Activated T-helper 2 cell treated with anti-CD3 and anti-CD28 coated beads, Interferon-gamma antibody, Interleukin-2, Interleukin-4, amounts not matched to agents 10 μg/mL and 5 μg/mL and 100 μg/mL, durations not matched to agents 14 hours and 24 hours and 36 hours (primary cell): ENCODE measurements at regions of chr3 and their contacts with region 1.

Region 1: DNA sequence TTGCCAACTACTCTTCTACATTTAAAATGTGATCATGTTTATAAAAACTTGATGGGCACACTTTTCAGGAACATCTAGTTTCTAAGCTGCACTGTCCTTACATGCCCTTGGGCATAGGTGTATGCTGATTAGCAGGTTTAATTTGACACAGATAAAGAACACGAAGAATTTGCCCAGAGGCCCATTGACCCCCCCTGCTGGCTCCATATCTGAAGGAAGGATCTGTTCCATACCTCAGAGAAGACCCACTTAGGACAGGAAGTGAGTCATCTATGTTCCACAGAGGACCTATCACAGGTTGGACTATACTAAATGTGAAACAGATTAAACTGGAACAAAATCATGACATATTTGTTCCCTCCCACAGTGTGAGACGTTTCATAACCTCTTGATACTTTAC is 92.8 kb upstream of the LPP start:
- DNase-seq: peak; percentile 59
- H3K4me3 Mint-ChIP-seq: peak overlapping the region; percentile 51
- H3K27ac Mint-ChIP-seq: peak overlapping the region; percentile 80
- H3K4me1 Mint-ChIP-seq: peaks cover 38% of the 10 kb centered on the region
- H3K27me3 Mint-ChIP-seq: no peaks in the 10 kb centered on the region

Region 2: GRCh38 chr3:187902041-187902471 is 159.1 kb before region 1 on chr3:
- intact Hi-C with region 1: no loop called
- DNase-seq: no peak
- H3K4me3 Mint-ChIP-seq: no peak overlapping the region
- H3K27ac Mint-ChIP-seq: no peak overlapping the region
- H3K4me1 Mint-ChIP-seq: peaks cover 11% of the 10 kb centered on the region
- H3K27me3 Mint-ChIP-seq: peaks cover 3% of the 10 kb centered on the region

Region 3: DNA sequence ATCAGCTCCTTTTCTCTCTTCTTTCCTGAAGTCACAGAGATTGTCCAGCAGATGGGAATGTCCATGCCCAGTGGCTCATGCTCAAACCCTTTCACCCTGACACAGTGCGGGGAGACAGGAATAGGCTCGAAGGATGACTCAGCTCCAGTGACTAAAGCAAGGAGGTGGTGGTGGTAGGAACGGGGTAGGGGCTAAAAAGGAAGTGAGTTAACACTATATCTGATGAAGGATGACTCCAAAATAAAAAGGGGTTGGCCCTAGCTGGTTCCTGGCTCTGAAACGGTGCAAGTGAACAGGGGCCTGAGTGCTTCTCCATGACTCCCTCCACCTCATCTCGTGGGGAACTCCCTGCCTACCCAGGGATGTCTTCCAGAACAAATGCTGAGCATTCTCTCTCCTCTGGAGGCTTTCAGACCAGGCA is 74.6 kb before region 1 on chr3:
- intact Hi-C with region 1: loop called (anchors 2 kb)
- DNase-seq: peak; percentile 35
- H3K4me3 Mint-ChIP-seq: peak overlapping the region; percentile 22
- H3K27ac Mint-ChIP-seq: peak overlapping the region; percentile 65
- H3K4me1 Mint-ChIP-seq: peaks cover 51% of the 10 kb centered on the region
- H3K27me3 Mint-ChIP-seq: no peaks in the 10 kb centered on the region

Region 4: GRCh38 chr3:187994221-187995042 is 66.7 kb before region 1 on chr3:
- intact Hi-C with region 1: loop called (anchors 2 kb)
- DNase-seq: no peak
- H3K4me3 Mint-ChIP-seq: peak overlapping the region; percentile 35
- H3K27ac Mint-ChIP-seq: peak overlapping the region; percentile 77
- H3K4me1 Mint-ChIP-seq: peaks cover 70% of the 10 kb centered on the region
- H3K27me3 Mint-ChIP-seq: no peaks in the 10 kb centered on the region

Region 5: DNA sequence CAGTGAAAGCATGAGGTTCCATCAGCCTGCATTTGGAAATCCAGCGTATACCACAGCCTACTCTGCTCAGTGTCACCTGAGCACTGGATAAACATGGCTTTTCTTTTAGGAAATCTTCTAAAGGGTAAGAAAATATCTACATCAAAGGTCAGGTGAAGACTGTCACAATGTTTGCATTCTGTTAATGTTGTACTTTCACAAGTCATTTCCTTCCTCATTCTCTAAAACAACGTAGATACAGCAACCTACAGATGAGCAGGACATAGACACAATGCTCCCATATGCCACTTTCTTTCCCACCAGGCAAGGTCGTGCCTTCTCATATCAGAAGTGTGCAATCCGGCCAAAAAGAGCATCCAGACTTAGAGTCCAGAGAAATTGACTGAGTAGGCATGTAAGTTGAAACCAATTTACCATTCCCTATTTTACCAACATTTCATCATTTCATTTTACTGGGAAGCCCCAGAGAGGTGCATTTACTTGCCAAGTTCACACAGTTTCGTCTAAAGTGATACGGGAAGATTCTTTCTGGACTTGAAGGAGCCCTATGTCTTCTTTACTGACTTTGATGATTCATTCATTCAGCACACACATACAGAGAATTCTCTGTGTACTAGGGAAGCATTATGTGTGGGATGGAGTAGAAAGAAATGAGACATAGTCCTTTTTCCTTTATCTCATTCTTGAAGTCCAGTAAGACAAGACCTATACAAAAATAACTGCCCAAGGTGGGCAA is 62.2 kb after region 1 on chr3:
- intact Hi-C with region 1: loop called (anchors 2 kb)
- DNase-seq: no peak
- H3K4me3 Mint-ChIP-seq: no peak overlapping the region
- H3K27ac Mint-ChIP-seq: peak overlapping the region; percentile 48
- H3K4me1 Mint-ChIP-seq: peaks cover 19% of the 10 kb centered on the region
- H3K27me3 Mint-ChIP-seq: peaks cover 10% of the 10 kb centered on the region

Region 6: GRCh38 chr3:188294823-188295487 is 233.8 kb after region 1 on chr3:
- intact Hi-C with region 1: loop called (anchors 5 kb)
- DNase-seq: no peak
- H3K4me3 Mint-ChIP-seq: no peak overlapping the region
- H3K27ac Mint-ChIP-seq: no peak overlapping the region
- H3K4me1 Mint-ChIP-seq: peaks cover 66% of the 10 kb centered on the region
- H3K27me3 Mint-ChIP-seq: no peaks in the 10 kb centered on the region

Region 7: GRCh38 chr3:188389711-188390342 is 328.7 kb after region 1 on chr3:
- intact Hi-C with region 1: loop called (anchors 10 kb)
- DNase-seq: peak; percentile 30
- H3K4me3 Mint-ChIP-seq: no peak overlapping the region
- H3K27ac Mint-ChIP-seq: peak overlapping the region; percentile 75
- H3K4me1 Mint-ChIP-seq: peaks cover 33% of the 10 kb centered on the region
- H3K27me3 Mint-ChIP-seq: no peaks in the 10 kb centered on the region